Left ventricle myocardium superior (tissue), 1 donor: ENCODE measurements at regions of chr6 and their contacts with region 1.

Region 1: DNA sequence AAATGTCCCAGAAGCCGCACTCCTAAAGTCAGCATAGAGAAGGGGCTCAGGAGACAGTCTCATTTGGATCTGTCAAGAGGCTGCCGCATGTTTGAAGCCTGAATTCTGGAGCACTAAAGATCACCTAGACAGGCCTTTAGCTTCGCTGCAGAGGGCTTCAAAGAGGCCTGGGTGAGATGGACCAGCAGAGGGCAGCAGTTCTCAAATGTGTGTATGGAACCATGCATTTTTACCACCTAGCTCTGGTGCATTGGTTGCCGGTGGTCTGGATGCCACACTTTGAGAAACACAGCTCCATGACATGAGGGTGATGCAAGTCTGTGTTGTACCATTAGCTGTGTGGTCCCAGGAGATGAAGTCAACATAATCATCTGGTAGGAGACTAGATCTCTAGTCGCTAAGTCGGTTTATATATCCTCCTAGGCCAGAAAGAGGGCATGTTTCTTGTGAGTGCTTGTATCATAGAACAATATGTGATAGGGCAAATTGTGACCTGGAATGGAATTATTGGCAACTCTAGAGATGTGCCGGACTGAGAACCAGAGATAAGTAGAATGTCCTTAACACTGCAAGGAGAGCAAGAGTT is 64.8 kb downstream of the KIAA0319 start:
- DNase-seq: peak; percentile 78
- ATAC-seq: peak; percentile 78

Region 2: DNA sequence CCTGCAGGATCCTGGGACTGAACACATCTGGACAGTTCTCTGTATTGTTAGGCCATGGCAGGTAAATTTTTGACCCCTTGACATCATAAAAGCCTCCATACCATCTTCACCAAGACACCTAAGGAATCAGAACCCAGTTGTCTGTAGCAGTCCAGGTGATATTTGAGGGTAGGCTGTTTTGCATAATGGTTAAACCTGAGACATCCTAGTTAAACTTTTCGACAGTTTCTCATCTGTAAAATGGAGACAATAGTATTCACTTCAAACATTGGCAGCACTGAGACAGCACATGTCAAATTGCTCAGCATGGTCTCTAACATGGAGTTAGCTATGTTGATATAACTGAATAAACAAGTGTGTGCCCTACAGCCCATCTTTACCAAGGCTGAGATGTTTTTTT is 113.0 kb after region 1 on chr6:
- intact Hi-C with region 1: loop called (anchors 2 kb)
- DNase-seq: no peak
- ATAC-seq: no peak

Region 3: DNA sequence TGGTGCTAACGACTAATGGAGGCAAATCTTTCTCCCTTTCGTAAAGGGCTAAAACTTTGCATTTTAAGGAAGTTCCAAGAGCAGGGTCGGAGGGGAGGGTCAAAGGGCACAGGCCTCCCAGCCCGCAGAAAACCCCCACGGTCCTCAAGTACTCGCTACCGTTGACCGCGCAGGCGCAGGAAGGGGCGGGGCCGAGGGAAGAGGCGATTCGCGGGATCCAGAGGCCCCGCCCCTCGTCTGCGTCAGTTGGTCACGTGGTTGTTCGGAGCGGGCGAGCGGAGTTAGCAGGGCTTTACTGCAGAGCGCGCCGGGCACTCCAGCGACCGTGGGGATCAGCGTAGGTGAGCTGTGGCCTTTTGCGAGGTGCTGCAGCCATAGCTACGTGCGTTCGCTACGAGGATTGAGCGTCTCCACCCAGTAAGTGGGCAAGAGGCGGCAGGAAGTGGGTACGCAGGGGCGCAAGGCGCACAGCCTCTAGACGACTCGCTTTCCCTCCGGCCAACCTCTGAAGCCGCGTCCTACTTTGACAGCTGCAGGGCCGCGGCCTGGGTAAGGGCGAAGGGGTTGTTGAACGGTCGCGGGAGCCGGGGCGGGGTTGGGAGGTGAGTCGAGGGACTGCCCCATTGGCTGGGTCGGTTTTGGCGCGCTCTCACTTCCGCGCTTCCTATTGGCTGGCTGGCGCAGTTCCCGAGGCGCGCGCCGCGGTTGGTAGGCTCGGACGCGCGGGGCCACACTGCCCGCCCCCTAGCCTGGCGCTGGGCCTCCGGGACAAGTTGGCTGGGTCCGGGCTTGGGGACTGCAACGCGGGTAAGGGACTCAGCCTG is 193.7 kb after region 1 on chr6 and contains the start of gene GMNN:
- intact Hi-C with region 1: loop called (anchors 5 kb)
- DNase-seq: peak; percentile 100
- ATAC-seq: peak; percentile 99
- total RNA-seq, gene GMNN: 8.3 TPM

Region 4: GRCh38 chr6:24960991-24961475 is 379.9 kb after region 1 on chr6:
- intact Hi-C with region 1: no loop called
- DNase-seq: no peak
- ATAC-seq: no peak

Region 5: DNA sequence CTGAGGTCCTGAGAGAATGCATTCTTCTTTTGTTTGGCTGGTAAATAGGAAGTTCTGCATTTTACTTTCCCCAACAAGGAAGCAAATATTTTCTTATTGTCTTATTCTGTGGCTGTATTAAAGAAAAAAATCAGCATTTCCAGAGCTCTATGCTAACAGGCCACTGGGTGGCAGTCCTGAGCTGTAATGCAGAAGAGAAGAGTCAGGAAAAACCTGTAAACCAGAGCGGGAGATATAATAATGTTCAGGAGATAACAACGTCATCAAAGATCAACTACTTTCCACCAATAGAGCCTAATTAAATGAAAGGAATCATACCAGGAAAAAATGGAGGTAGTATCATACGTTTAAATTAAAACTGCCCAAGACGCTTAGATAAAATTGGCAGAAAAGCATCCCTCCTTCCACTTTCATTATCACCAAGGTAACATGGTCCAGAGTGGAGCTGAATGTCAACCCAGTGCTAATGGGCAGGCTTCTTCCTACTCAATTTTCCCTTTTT is 642.4 kb after region 1 on chr6:
- intact Hi-C with region 1: no loop called
- DNase-seq: peak; percentile 67
- ATAC-seq: peak; percentile 63